Left cardiac atrium (tissue), 4 donors: ENCODE measurements at regions of chr13 and their contacts with region 1.

Region 1: DNA sequence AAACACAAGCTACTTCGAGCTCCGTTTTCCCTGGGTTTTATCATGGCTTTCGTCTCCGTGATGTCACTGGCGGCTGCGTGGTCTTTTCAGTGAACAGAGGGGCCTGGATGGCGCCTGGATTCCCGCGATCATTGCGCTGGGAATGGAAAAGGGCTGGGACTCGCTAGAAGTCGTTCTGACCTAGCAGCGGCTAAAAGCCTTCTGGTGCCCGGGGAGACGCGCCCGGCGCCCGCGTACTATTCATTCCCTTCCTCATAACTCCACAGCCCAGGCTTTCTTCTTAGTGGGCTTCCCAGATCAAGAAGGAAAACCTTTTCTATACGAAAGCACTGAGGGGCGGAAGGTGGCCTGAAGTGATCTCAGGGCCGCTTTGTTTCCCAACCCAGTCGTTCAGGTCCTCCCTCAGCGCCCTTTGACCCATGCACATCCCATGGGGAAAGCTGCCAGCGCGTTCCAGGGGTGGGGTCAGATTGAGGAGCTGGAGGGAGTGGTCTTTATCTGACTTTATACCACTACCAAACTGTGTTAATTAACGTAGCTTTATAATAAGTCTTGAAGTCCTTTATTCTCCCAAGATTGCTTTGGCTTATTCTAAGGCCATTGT is 96.6 kb downstream of the ELF1 start:
- DNase-seq: peak; percentile 41
- ATAC-seq: no peak

Region 2: DNA sequence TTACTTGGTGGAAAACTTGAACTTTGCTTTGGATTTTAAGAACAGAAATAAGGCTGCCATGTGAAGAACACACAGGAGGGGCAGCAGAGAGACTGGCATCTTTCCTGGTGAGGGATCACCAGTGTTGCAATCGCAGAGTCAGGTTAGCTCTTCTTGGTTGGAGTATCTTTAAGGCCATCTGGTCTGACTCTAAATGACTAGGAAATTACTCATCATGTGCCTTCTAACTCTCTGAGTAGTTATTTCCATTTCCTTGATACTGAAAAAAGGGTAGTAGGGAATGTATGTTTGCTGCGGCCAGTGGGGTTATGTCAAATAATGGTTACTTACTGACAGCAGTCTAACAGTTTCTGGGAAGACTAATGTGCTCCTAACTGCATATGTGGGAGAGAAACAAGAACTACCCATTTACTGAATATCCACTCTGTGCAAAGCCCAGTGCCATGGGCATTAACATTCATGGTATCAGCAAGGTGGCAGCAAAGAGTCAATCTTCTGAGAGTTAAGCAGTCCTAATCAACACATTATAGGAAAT is 1144.9 kb before region 1 on chr13:
- intact Hi-C with region 1: no loop called
- DNase-seq: no peak
- ATAC-seq: peak in 1 of 2 donors; percentile 23

Region 3: GRCh38 chr13:40789275-40790133 is 133.0 kb before region 1 on chr13 and contains the start of gene SLC25A15:
- intact Hi-C with region 1: loop called in 1 of 2 experiments (anchors 10 kb)
- DNase-seq: peak; percentile 90
- ATAC-seq: peak; percentile 97
- total RNA-seq, gene SLC25A15: 4.7 to 4.9 TPM